Psoas muscle (tissue), 8 donors: ENCODE measurements at regions of chr2 and their contacts with region 1.

Region 1: GRCh38 chr2:43984533-43984932 is 11.3 kb downstream of the LRPPRC start:
- DNase-seq: no peak
- ATAC-seq: no peak
- H3K4me3 ChIP-seq: no peak overlapping the region
- H3K27ac ChIP-seq: no peak overlapping the region
- H3K4me1 ChIP-seq: peaks cover 4% of the 10 kb centered on the region
- H3K27me3 ChIP-seq: no peaks in the 10 kb centered on the region
- CTCF ChIP-seq: no peak

Region 2: DNA sequence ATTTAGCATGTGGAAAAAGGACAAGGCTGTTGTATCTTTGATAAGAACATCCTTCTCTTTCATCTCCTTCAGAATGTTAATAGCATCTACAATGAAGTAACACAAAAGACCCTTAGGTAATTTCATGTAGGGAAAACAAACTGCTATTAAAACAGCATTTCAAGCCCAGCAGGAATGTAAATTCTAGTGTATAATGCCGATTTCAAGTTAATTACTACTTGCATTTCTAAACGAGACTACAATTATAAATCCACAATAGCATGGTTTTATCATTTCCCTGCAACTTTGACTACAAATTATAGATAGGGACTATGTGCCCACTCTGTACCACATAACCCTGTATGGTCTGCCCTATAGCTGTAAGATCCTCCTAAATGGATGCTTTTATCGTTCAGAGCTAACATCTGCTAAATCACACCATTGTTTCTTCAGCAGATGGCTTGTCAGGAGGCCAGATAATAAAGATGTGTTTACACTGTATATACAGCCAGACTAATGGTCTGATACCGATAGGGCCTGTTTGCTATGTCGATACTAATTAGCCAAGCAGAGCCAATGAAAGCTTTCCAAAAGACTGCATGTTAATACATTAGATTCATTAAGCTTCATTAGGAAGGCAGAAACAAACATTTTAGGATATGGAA is 40.6 kb before region 1 on chr2:
- intact Hi-C with region 1: loop called in 1 of 2 experiments (anchors 5 kb)
- DNase-seq: no peak
- ATAC-seq: no peak
- H3K4me3 ChIP-seq: no peak overlapping the region
- H3K27ac ChIP-seq: no peak overlapping the region
- H3K4me1 ChIP-seq: no peaks in the 10 kb centered on the region
- H3K27me3 ChIP-seq: no peaks in the 10 kb centered on the region
- CTCF ChIP-seq: no peak

Region 3: GRCh38 chr2:44016282-44016681 is 31.7 kb after region 1 on chr2:
- intact Hi-C with region 1: no loop called
- DNase-seq: peak in 1 of 2 donors; percentile 23
- ATAC-seq: peak in 1 of 4 donors; percentile 51
- H3K4me3 ChIP-seq: no peak overlapping the region
- H3K27ac ChIP-seq: no peak overlapping the region
- H3K4me1 ChIP-seq: no peaks in the 10 kb centered on the region
- H3K27me3 ChIP-seq: peaks cover 0 to 3% (median 0%) of the 10 kb centered on the region in 3 donors
- CTCF ChIP-seq: no peak